ENCODE measurements at regions of chr16 and their contacts with region 1.

Region 1: DNA sequence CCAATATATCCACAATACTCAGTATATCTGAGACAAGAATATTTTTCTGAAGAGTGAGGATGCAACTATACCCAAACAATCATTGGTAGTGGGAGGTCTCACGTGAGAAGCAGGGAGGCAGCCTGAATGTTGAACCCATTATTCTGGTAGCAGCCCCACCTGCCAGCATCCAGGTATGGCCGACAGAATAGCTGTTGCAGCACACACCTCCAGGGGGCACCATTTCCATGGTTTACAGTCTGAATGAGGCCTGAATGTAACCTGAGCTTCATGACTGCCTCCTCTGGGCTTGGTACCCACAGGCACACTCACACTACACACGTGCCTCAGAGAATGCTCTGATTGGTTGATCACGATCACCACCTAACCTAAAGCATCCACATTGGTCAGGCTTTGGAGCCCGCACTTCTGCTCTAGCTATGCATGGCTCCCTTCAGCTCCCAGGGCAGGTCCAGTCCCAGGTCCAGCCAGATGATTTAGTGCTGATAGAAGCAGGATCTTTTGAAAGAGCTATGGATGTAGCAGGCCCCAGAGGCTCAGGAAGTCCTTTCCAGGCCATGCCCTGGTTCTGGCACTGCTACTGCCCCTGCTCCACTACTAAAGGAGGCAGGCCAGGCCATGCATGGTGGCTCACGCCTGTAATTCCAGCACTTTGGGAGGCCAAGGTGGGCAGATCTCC is 11.0 kb upstream of the CBFB start:
- DNase-seq: peak; percentile 89
- H3K4me3 ChIP-seq: no peak overlapping the region
- H3K27ac ChIP-seq: peak overlapping the region in 1 of 2 experiments; percentile 11; a peak in 1 of 4 replicates
- H3K4me1 ChIP-seq: peaks cover 11 to 14% of the 10 kb centered on the region in 2 experiments; a peak in 2 of 4 replicates
- H3K27me3 ChIP-seq: no peaks in the 10 kb centered on the region
- CTCF ChIP-seq: peak; percentile 89
- EP300 ChIP-seq: no peak
- RAD21 ChIP-seq: peak; percentile 98

Region 2: DNA sequence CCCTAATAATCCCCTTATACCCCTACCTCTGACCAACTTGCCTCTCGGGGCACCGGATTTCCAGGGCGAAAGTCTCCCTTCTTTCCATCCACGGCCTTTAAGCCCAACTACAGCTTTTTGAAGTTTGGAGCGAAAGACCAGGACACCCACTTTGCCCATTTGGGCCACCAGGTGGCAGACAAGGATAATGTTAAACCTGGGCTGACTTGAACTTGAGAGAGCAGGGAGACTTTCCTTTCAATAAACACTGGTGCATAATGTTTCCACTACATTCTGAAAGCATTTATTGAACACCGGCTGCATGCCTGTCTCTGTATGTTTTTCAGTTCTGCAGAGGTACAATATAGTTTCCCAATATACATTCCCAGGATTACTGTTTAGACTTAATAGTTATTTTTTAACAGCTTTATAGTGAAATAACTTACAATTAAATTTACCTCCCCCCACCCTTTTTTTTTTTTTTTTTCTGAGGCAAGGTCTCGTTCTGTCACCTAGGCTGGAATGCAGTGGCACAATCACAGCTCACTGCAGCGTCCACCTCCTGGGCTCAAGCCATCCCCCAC is 63.8 kb before region 1 on chr16:
- CTCF ChIA-PET with region 1: interaction called, 18 read pairs
- POLR2A ChIA-PET with region 1: no interaction called
- DNase-seq: peak; percentile 83
- H3K4me3 ChIP-seq: peak overlapping the region in 1 of 2 experiments; percentile 23; a peak in 1 of 4 replicates
- H3K27ac ChIP-seq: no peak overlapping the region
- H3K4me1 ChIP-seq: no peaks in the 10 kb centered on the region
- H3K27me3 ChIP-seq: no peaks in the 10 kb centered on the region
- CTCF ChIP-seq: peak; percentile 87
- EP300 ChIP-seq: no peak
- RAD21 ChIP-seq: peak; percentile 91

Region 3: GRCh38 chr16:67028555-67029248 is 10.8 kb after region 1 on chr16 and contains the start of gene CBFB:
- CTCF ChIA-PET with region 1: interaction called, 32 read pairs
- POLR2A ChIA-PET with region 1: interaction called, 5 read pairs
- DNase-seq: peak; percentile 99
- H3K4me3 ChIP-seq: peak within 1 kb of the TSS; percentile 78 to 81
- H3K27ac ChIP-seq: peak within 1 kb of the TSS; percentile 87 to 91
- H3K4me1 ChIP-seq: peaks cover 14 to 31% of the 10 kb centered on the region in 2 experiments; a peak in 3 of 4 replicates
- H3K27me3 ChIP-seq: no peaks in the 10 kb centered on the region
- CTCF ChIP-seq: peak; percentile 16; the same call in 1 of the 2 replicates
- EP300 ChIP-seq: no peak
- RAD21 ChIP-seq: no peak
- polyA plus RNA-seq, gene CBFB: 38.8 and 40.1 TPM in 2 replicates

Region 4: GRCh38 chr16:67109407-67110135 is 91.6 kb after region 1 on chr16 and contains the start of gene PHAF1:
- CTCF ChIA-PET with region 1: interaction called, 36 read pairs
- POLR2A ChIA-PET with region 1: interaction called, 3 read pairs
- DNase-seq: peak; percentile 100
- H3K4me3 ChIP-seq: peak within 1 kb of the TSS; percentile 84 to 97
- H3K27ac ChIP-seq: peak within 1 kb of the TSS; percentile 38 to 75; a peak in 3 of 4 replicates
- H3K4me1 ChIP-seq: peaks cover 10 to 23% of the 10 kb centered on the region in 2 experiments; a peak in 1 of 4 replicates
- H3K27me3 ChIP-seq: no peaks in the 10 kb centered on the region
- CTCF ChIP-seq: no peak
- EP300 ChIP-seq: peak in 1 of 2 experiments; percentile 36; a peak in 1 of 4 replicates
- RAD21 ChIP-seq: no peak
- polyA plus RNA-seq, gene PHAF1: 17.3 and 22.6 TPM in 2 replicates

Region 5: GRCh38 chr16:67183627-67184328 is 165.8 kb after region 1 on chr16 and contains the start of gene MATCAP1:
- CTCF ChIA-PET with region 1: interaction called, 12 read pairs
- POLR2A ChIA-PET with region 1: no interaction called
- DNase-seq: peak; percentile 99
- H3K4me3 ChIP-seq: peak within 1 kb of the TSS; percentile 81 to 82
- H3K27ac ChIP-seq: peak within 1 kb of the TSS; percentile 92 to 97
- H3K4me1 ChIP-seq: peaks cover 22 to 30% of the 10 kb centered on the region in 2 experiments
- H3K27me3 ChIP-seq: no peaks in the 10 kb centered on the region
- CTCF ChIP-seq: no peak
- EP300 ChIP-seq: no peak
- RAD21 ChIP-seq: no peak
- polyA plus RNA-seq, gene MATCAP1: 68.5 and 83.5 TPM in 2 replicates

Region 6: GRCh38 chr16:67537270-67537635 is 519.3 kb after region 1 on chr16:
- CTCF ChIA-PET with region 1: no interaction called
- POLR2A ChIA-PET with region 1: no interaction called
- DNase-seq: peak; percentile 85
- H3K4me3 ChIP-seq: peak overlapping the region; percentile 52 to 71
- H3K27ac ChIP-seq: peak overlapping the region in 1 of 2 experiments; percentile 47; a peak in 2 of 4 replicates
- H3K4me1 ChIP-seq: peaks cover 0 to 9% of the 10 kb centered on the region in 2 experiments; a peak in 1 of 4 replicates
- H3K27me3 ChIP-seq: no peaks in the 10 kb centered on the region
- CTCF ChIP-seq: no peak
- EP300 ChIP-seq: no peak
- RAD21 ChIP-seq: no peak